ENCODE measurements at regions of chr16 and their contacts with region 1.

Region 1: GRCh38 chr16:57757326-57757786 is 21.8 kb downstream of the KATNB1 start:
- DNase-seq: peak; percentile 77
- H3K4me3 ChIP-seq: no peak overlapping the region
- H3K27ac ChIP-seq: no peak overlapping the region
- H3K4me1 ChIP-seq: no peaks in the 10 kb centered on the region
- H3K27me3 ChIP-seq: no peaks in the 10 kb centered on the region
- CTCF ChIP-seq: peak; percentile 96 to 98
- POLR2A ChIP-seq: no peak

Region 2: DNA sequence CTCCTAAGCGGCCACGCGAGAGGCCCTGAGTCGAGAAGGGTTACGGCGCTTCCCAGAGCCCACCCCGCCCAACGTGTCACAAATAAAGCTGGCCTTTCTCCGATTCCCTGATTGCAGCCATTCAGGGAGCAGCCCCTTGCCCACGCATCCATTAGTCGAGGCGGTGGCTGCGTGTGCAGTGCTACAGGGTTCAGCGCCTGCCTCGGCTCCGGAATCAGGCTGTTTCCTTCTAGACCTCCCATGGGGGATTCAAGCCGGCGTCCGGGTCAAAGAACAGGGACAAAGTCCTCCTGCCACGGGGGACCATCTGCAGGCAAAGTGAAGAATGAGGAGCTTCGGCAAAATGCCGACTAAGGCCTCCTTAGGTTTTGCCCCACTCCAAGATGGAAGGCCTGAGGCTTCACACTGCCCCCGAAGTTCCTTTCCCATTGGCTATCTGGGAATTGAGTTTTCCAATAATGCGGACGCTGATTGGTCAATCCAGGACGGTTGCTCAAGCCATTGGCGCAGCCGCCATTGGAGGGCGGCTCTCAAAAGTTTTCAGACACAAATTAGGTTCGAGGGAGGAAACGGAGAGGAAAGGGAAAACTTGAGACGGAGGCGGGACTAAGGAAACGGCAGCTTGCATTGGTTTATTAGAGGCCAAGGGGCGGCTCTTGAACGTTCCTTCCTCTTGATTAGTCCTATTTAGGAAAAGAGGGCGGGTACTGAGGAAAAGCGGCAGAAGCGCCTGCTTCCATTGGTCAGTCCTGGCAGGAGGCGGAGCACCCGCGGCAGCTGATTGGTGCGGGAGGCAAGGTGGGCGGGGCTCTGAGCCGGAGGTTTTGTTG is 22.2 kb before region 1 on chr16:
- CTCF ChIA-PET with region 1: interaction called, 3 read pairs
- POLR2A ChIA-PET with region 1: no interaction called
- dilution Hi-C with region 1: no loop called
- intact Hi-C with region 1: loop called (anchors 1 kb)
- DNase-seq: peak; percentile 100
- H3K4me3 ChIP-seq: peak overlapping the region; percentile 72 to 93 (median 74)
- H3K27ac ChIP-seq: peak overlapping the region; percentile 81
- H3K4me1 ChIP-seq: peaks cover 19% of the 10 kb centered on the region
- H3K27me3 ChIP-seq: no peaks in the 10 kb centered on the region
- CTCF ChIP-seq: no peak
- POLR2A ChIP-seq: peak; percentile 58

Region 3: DNA sequence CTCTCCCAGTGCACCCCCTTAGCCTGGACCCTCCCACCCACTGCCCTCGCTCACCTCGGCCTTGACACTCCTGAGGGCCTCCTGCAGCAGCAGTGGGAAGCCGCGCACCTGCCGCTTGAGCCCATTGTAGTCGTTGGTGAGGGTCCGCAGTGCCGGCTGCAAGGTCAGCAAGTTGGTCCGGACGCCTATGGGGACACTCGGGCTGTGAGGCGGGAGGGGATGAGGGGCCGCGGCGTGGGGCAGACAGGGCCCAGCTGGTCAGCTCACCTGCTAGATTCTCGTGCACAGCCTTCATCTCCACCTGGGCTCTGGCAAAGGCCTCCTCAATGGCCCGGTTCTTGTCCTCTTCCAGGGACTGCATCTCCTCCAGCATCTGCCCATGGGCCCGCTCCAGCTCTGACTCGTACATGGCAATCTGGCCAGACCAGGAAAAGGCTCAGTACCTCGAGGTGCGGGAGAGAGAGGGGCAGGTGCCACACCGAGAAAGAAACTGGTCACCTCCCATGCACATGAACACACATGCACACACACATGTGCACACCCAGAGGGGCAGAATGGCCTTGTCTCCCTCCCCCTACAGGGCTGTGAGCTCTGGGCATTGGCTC is 12.3 kb after region 1 on chr16:
- CTCF ChIA-PET with region 1: interaction called, 13 read pairs
- POLR2A ChIA-PET with region 1: no interaction called
- dilution Hi-C with region 1: no loop called
- intact Hi-C with region 1: no loop called
- DNase-seq: no peak
- H3K4me3 ChIP-seq: no peak overlapping the region
- H3K27ac ChIP-seq: no peak overlapping the region
- H3K4me1 ChIP-seq: no peaks in the 10 kb centered on the region
- H3K27me3 ChIP-seq: no peaks in the 10 kb centered on the region
- CTCF ChIP-seq: no peak
- POLR2A ChIP-seq: no peak

Region 4: GRCh38 chr16:57802341-57803133 is 45.2 kb after region 1 on chr16 and contains the start of gene KIFC3:
- CTCF ChIA-PET with region 1: no interaction called
- POLR2A ChIA-PET with region 1: no interaction called
- dilution Hi-C with region 1: no loop called
- intact Hi-C with region 1: loop called (anchors 1 kb)
- DNase-seq: peak; percentile 78
- H3K4me3 ChIP-seq: peak within 1 kb of the TSS; percentile 52 to 70 (median 68)
- H3K27ac ChIP-seq: peak within 1 kb of the TSS; percentile 84
- H3K4me1 ChIP-seq: peaks cover 25% of the 10 kb centered on the region
- H3K27me3 ChIP-seq: no peaks in the 10 kb centered on the region
- CTCF ChIP-seq: no peak
- POLR2A ChIP-seq: peak; percentile 63
- total RNA-seq, gene KIFC3: 56.7 and 62.2 TPM in 2 replicates

Region 5: GRCh38 chr16:57899771-57900661 is 142.7 kb after region 1 on chr16:
- CTCF ChIA-PET with region 1: no interaction called
- POLR2A ChIA-PET with region 1: no interaction called
- dilution Hi-C with region 1: no loop called
- intact Hi-C with region 1: loop called (anchors 1 kb)
- DNase-seq: peak; percentile 67
- H3K4me3 ChIP-seq: no peak overlapping the region
- H3K27ac ChIP-seq: no peak overlapping the region
- H3K4me1 ChIP-seq: no peaks in the 10 kb centered on the region
- H3K27me3 ChIP-seq: peaks cover 0 to 3% of the 10 kb centered on the region in 2 experiments
- CTCF ChIP-seq: peak; percentile 85 to 87
- POLR2A ChIP-seq: no peak

Region 6: GRCh38 chr16:58000706-58001676 is 243.6 kb after region 1 on chr16 and contains the start of gene USB1:
- CTCF ChIA-PET with region 1: interaction called, 12 read pairs
- POLR2A ChIA-PET with region 1: no interaction called
- dilution Hi-C with region 1: no loop called
- intact Hi-C with region 1: loop called (anchors 1 kb)
- DNase-seq: peak; percentile 74
- H3K4me3 ChIP-seq: peak within 1 kb of the TSS; percentile 68 to 90 (median 85)
- H3K27ac ChIP-seq: peak within 1 kb of the TSS; percentile 19
- H3K4me1 ChIP-seq: peaks cover 17% of the 10 kb centered on the region
- H3K27me3 ChIP-seq: no peaks in the 10 kb centered on the region
- CTCF ChIP-seq: peak; percentile 63 to 73
- POLR2A ChIP-seq: peak; percentile 92
- total RNA-seq, gene USB1: 64.6 and 66.6 TPM in 2 replicates

Measured in endothelial cell of umbilical vein (primary cell).